ENCODE measurements at regions of chr7 and their contacts with region 1.

Region 1: DNA sequence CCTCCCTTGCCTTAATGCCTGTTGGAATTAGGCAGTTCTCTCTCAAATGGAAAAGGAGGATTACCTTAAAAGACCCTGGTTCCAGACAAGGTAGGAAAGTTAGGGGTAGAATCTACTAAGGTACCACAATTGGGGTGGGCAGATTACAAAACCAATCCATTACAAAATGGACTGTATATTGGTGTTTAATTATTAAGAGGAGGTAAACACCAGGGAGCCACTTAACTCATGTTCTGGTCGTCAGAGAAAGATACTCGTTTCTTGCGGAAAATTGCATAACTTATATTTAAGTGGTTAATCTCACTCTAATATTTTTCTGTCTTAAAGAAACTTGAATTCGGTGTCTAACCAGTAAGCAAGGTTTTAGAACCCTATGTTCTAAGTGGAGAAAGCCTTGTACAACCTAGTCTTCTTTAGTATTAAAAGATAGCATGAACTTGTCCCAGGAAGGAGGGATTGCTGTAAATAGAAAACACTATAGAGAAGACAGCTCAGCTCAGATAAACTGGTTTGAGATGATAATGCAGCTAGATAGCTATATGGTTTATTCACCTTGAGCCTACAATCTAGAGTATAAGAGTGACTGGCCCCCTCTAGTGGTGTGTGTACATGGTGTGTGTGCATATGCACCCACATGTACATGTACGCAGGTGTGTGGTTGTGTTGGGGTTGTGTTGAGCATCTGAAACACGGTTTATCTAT is 58.0 kb upstream of the STRIP2 start:
- DNase-seq: peak; percentile 59
- ATAC-seq: peak; percentile 56
- H3K4me3 ChIP-seq: no peak overlapping the region
- H3K4me3 Mint-ChIP-seq: no peak overlapping the region
- H3K27ac ChIP-seq: no peak overlapping the region
- H3K27ac Mint-ChIP-seq: no peak overlapping the region
- H3K4me1 ChIP-seq: no peaks in the 10 kb centered on the region
- H3K4me1 Mint-ChIP-seq: peaks cover 4% of the 10 kb centered on the region
- H3K27me3 ChIP-seq: no peaks in the 10 kb centered on the region
- H3K27me3 Mint-ChIP-seq: no peaks in the 10 kb centered on the region
- CTCF ChIP-seq: peak; percentile 78

Region 2: DNA sequence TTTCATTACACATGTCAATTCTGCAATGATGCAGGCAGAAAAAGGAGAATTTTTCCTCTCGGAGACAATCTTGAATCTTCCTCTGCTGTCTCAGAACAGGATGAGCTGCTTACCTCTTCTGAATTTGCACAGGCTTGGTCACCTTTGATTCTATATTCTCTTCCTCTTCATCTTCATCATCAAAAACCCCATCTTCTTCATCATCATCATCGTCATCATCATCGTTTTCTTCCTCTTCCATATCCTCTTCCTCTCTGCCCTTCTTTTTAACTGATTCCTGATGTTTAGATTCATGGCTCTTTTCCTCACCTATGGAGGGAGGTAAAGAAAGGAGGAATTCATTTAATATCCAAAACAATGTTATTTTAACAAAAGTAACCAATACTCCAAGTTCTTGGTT is 1040.5 kb before region 1 on chr7:
- CTCF ChIA-PET with region 1: no interaction called
- POLR2A ChIA-PET with region 1: no interaction called
- intact Hi-C with region 1: no loop called
- DNase-seq: no peak
- ATAC-seq: no peak
- H3K4me3 ChIP-seq: no peak overlapping the region
- H3K4me3 Mint-ChIP-seq: no peak overlapping the region
- H3K27ac ChIP-seq: no peak overlapping the region
- H3K27ac Mint-ChIP-seq: no peak overlapping the region
- H3K4me1 ChIP-seq: no peaks in the 10 kb centered on the region
- H3K4me1 Mint-ChIP-seq: peaks cover 5% of the 10 kb centered on the region
- H3K27me3 ChIP-seq: no peaks in the 10 kb centered on the region
- H3K27me3 Mint-ChIP-seq: no peaks in the 10 kb centered on the region
- CTCF ChIP-seq: no peak

Region 3: GRCh38 chr7:129359638-129360037 is 16.6 kb before region 1 on chr7:
- CTCF ChIA-PET with region 1: interaction called, 23 read pairs
- POLR2A ChIA-PET with region 1: no interaction called
- intact Hi-C with region 1: no loop called
- DNase-seq: no peak
- ATAC-seq: no peak
- H3K4me3 ChIP-seq: no peak overlapping the region
- H3K4me3 Mint-ChIP-seq: no peak overlapping the region
- H3K27ac ChIP-seq: no peak overlapping the region
- H3K27ac Mint-ChIP-seq: no peak overlapping the region
- H3K4me1 ChIP-seq: no peaks in the 10 kb centered on the region
- H3K4me1 Mint-ChIP-seq: no peaks in the 10 kb centered on the region
- H3K27me3 ChIP-seq: no peaks in the 10 kb centered on the region
- H3K27me3 Mint-ChIP-seq: no peaks in the 10 kb centered on the region
- CTCF ChIP-seq: no peak

Region 4: GRCh38 chr7:129389829-129390228 is 13.6 kb after region 1 on chr7:
- CTCF ChIA-PET with region 1: interaction called, 27 read pairs
- POLR2A ChIA-PET with region 1: no interaction called
- intact Hi-C with region 1: no loop called
- DNase-seq: no peak
- ATAC-seq: no peak
- H3K4me3 ChIP-seq: no peak overlapping the region
- H3K4me3 Mint-ChIP-seq: no peak overlapping the region
- H3K27ac ChIP-seq: no peak overlapping the region
- H3K27ac Mint-ChIP-seq: no peak overlapping the region
- H3K4me1 ChIP-seq: no peaks in the 10 kb centered on the region
- H3K4me1 Mint-ChIP-seq: no peaks in the 10 kb centered on the region
- H3K27me3 ChIP-seq: no peaks in the 10 kb centered on the region
- H3K27me3 Mint-ChIP-seq: no peaks in the 10 kb centered on the region
- CTCF ChIP-seq: no peak